GM12878 (cell line): ENCODE measurements at regions of chr6 and their contacts with region 1.

Region 1: DNA sequence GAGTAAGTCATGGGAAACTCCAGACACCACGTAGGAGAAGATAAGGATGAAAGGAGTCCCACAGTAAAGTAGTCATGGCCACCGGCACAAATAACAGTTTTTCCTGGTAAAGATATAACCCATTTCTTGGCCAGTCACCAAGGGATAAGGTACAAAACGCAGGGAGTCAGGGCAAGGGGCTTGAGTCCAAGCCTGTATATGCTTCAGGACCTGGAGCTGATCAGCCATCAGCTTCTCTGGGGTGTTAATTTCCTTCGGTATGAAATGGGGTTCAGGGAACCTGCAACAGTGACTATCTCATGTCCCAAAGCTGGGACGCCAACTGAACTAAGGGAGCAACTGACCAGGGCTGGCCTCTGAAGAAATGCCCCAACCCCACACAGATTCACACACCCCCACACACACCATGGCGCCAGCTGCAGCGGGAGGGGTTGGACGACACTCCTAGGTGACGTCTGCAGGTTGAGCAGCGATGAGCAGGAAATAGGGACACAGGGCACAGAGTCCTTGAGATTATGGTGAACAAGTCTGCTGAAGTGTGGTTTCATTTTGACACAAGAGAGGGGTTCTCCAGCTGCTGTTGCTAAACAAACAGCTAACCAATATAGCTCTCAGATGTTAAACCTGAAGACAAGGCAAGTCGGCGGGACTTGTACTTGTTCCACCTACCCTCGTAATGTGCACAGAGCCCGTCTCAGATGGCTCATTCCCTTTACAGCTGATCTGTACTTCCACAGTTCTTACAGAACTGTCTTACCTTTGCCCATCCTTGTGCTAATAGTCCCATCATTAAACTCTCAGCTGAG is 7.4 kb upstream of the ADTRP start:
- DNase-seq: peak; percentile 93
- ATAC-seq: peak; percentile 93
- H3K4me3 ChIP-seq: peak overlapping the region; percentile 46
- H3K27ac ChIP-seq: peak overlapping the region; percentile 89
- H3K4me1 ChIP-seq: peaks cover 25% of the 10 kb centered on the region
- H3K27me3 ChIP-seq: no peaks in the 10 kb centered on the region
- CTCF ChIP-seq: no peak
- EP300 ChIP-seq: peak; percentile 83 to 92
- POLR2A ChIP-seq: peak; percentile 66
- RAD21 ChIP-seq: peak; percentile 27; the same call in 1 of the 2 replicates

Region 2: DNA sequence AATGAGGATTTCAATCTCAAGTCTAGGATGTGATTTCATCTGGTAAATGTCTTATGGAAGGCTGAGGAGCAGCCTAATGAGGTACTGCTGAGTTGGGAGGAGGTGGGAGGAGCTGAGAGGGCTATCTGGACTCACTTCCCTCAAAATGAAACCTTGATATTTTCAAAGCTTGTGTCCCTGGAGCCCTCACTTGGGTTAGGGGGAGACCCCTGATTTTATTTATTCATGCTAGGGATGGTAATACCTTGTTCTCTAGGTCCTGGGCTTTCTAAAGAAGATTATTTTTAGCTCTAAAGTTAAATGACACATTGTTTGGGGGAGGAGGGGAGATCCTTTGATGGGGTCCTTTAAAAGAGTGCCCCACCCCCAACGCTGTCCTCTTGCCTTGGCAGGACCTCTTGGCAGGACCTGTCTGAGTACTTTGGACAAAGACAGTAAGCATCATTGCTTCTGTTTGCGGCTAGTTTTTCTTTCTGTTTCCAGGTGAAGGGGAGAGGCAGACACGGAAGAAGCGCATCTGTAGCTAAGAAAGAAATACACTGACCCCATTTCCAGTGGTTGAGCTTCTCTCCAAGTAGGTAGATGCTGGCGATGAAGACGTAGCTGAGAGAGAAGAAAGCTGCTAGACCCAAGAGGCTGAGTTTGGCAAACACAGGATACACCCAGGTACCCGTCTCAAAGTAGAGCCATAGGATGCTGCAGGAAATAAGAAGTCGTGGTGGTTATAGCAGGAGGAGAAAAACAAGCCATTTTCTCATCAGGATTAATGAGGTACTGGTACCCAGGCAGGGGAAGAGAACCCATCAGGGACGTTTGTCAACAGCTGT is 63.0 kb before region 1 on chr6:
- CTCF ChIA-PET with region 1: interaction called, 21 read pairs
- POLR2A ChIA-PET with region 1: interaction called, 10 read pairs
- RAD21 ChIA-PET with region 1: interaction called, 49 read pairs
- SMC1A ChIA-PET with region 1: interaction called, 42 read pairs
- in situ Hi-C with region 1: no loop called
- intact Hi-C with region 1: no loop called
- DNase-seq: no peak
- ATAC-seq: peak; percentile 78
- H3K4me3 ChIP-seq: peak overlapping the region; percentile 63
- H3K27ac ChIP-seq: peak overlapping the region; percentile 88
- H3K4me1 ChIP-seq: peaks cover 8% of the 10 kb centered on the region
- H3K27me3 ChIP-seq: no peaks in the 10 kb centered on the region
- CTCF ChIP-seq: no peak
- EP300 ChIP-seq: no peak
- POLR2A ChIP-seq: no peak; the same call in 1 of the 2 replicates
- RAD21 ChIP-seq: 0 out of 2 replicates have a peak, but pooled peaks have one; percentile 4

Region 3: GRCh38 chr6:11766061-11766460 is 19.9 kb before region 1 on chr6:
- CTCF ChIA-PET with region 1: interaction called, 3 read pairs
- POLR2A ChIA-PET with region 1: interaction called, 6 read pairs
- RAD21 ChIA-PET with region 1: interaction called, 4 read pairs
- SMC1A ChIA-PET with region 1: interaction called, 14 read pairs
- in situ Hi-C with region 1: no loop called
- intact Hi-C with region 1: no loop called
- DNase-seq: no peak
- ATAC-seq: no peak
- H3K4me3 ChIP-seq: no peak overlapping the region
- H3K27ac ChIP-seq: no peak overlapping the region
- H3K4me1 ChIP-seq: peaks cover 11% of the 10 kb centered on the region
- H3K27me3 ChIP-seq: no peaks in the 10 kb centered on the region
- CTCF ChIP-seq: no peak
- EP300 ChIP-seq: no peak
- POLR2A ChIP-seq: no peak
- RAD21 ChIP-seq: peak; percentile 64

Region 4: DNA sequence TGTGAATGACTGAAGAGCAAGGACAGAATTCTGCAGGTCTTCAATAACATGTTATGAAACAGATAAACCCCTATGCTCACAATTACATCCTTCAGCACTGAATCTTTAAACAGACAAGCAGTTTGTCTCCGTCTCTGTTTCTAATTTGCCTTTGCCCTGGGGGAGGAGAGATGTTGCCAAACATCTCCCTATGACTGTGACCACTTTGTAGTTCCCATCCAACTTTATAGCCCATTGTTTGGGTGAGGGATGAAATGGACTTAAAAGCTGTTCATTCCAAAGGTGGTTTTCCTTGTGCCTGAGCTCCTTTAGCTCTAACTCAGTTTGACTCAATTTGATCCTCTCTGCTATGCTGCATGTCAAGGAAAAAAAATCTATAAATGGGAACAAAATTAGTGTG is 12.1 kb after region 1 on chr6:
- CTCF ChIA-PET with region 1: interaction called, 5 read pairs
- POLR2A ChIA-PET with region 1: interaction called, 4 read pairs
- RAD21 ChIA-PET with region 1: interaction called, 23 read pairs
- SMC1A ChIA-PET with region 1: interaction called, 9 read pairs
- in situ Hi-C with region 1: no loop called
- intact Hi-C with region 1: no loop called
- DNase-seq: no peak
- ATAC-seq: no peak
- H3K4me3 ChIP-seq: no peak overlapping the region
- H3K27ac ChIP-seq: no peak overlapping the region
- H3K4me1 ChIP-seq: no peaks in the 10 kb centered on the region
- H3K27me3 ChIP-seq: no peaks in the 10 kb centered on the region
- CTCF ChIP-seq: no peak
- EP300 ChIP-seq: no peak
- POLR2A ChIP-seq: no peak
- RAD21 ChIP-seq: no peak

Region 5: GRCh38 chr6:11815231-11815630 is 29.3 kb after region 1 on chr6:
- CTCF ChIA-PET with region 1: interaction called, 4 read pairs
- POLR2A ChIA-PET with region 1: interaction called, 4 read pairs
- RAD21 ChIA-PET with region 1: interaction called, 19 read pairs
- SMC1A ChIA-PET with region 1: interaction called, 37 read pairs
- in situ Hi-C with region 1: no loop called
- intact Hi-C with region 1: no loop called
- DNase-seq: no peak
- ATAC-seq: no peak
- H3K4me3 ChIP-seq: no peak overlapping the region
- H3K27ac ChIP-seq: no peak overlapping the region; the same call in 1 of the 2 replicates
- H3K4me1 ChIP-seq: peaks cover 15% of the 10 kb centered on the region; the same call in 1 of the 2 replicates
- H3K27me3 ChIP-seq: no peaks in the 10 kb centered on the region
- CTCF ChIP-seq: no peak
- EP300 ChIP-seq: no peak
- POLR2A ChIP-seq: no peak
- RAD21 ChIP-seq: no peak

Region 6: GRCh38 chr6:11824986-11825385 is 39.0 kb after region 1 on chr6:
- CTCF ChIA-PET with region 1: interaction called, 13 read pairs
- POLR2A ChIA-PET with region 1: interaction called, 20 read pairs
- RAD21 ChIA-PET with region 1: interaction called, 36 read pairs
- SMC1A ChIA-PET with region 1: interaction called, 37 read pairs
- in situ Hi-C with region 1: no loop called
- intact Hi-C with region 1: loop called (anchors 2 kb)
- DNase-seq: peak; percentile 91
- ATAC-seq: peak; percentile 86
- H3K4me3 ChIP-seq: no peak overlapping the region
- H3K27ac ChIP-seq: peak overlapping the region; percentile 70
- H3K4me1 ChIP-seq: peaks cover 47% of the 10 kb centered on the region
- H3K27me3 ChIP-seq: no peaks in the 10 kb centered on the region
- CTCF ChIP-seq: no peak
- EP300 ChIP-seq: peak; percentile 90; a peak in 3 of 4 replicates
- POLR2A ChIP-seq: no peak
- RAD21 ChIP-seq: peak; percentile 14

Region 7: GRCh38 chr6:11833626-11834592 is 47.9 kb after region 1 on chr6:
- CTCF ChIA-PET with region 1: interaction called, 13 read pairs
- POLR2A ChIA-PET with region 1: interaction called, 20 read pairs
- RAD21 ChIA-PET with region 1: interaction called, 35 read pairs
- SMC1A ChIA-PET with region 1: interaction called, 29 read pairs
- in situ Hi-C with region 1: no loop called
- intact Hi-C with region 1: no loop called
- DNase-seq: peak; percentile 84
- ATAC-seq: peak; percentile 84
- H3K4me3 ChIP-seq: peak overlapping the region; percentile 0; the same call in 1 of the 2 replicates
- H3K27ac ChIP-seq: peak overlapping the region; percentile 95
- H3K4me1 ChIP-seq: peaks cover 45% of the 10 kb centered on the region
- H3K27me3 ChIP-seq: no peaks in the 10 kb centered on the region
- CTCF ChIP-seq: no peak
- EP300 ChIP-seq: peak; percentile 97 to 100
- POLR2A ChIP-seq: peak; percentile 41; the same call in 1 of the 2 replicates
- RAD21 ChIP-seq: peak; percentile 42; the same call in 1 of the 2 replicates

Region 8: GRCh38 chr6:12001004-12001705 is 215.2 kb after region 1 on chr6:
- CTCF ChIA-PET with region 1: no interaction called
- POLR2A ChIA-PET with region 1: no interaction called
- RAD21 ChIA-PET with region 1: no interaction called
- SMC1A ChIA-PET with region 1: no interaction called
- in situ Hi-C with region 1: no loop called
- intact Hi-C with region 1: no loop called
- DNase-seq: no peak
- ATAC-seq: no peak
- H3K4me3 ChIP-seq: no peak overlapping the region
- H3K27ac ChIP-seq: no peak overlapping the region
- H3K4me1 ChIP-seq: no peaks in the 10 kb centered on the region
- H3K27me3 ChIP-seq: no peaks in the 10 kb centered on the region
- CTCF ChIP-seq: no peak
- EP300 ChIP-seq: no peak
- POLR2A ChIP-seq: no peak
- RAD21 ChIP-seq: no peak